CD4-positive, alpha-beta T cell (primary cell): ENCODE measurements at regions of chr9 and their contacts with region 1.

Region 1: GRCh38 chr9:25412646-25413045 is 265.6 kb downstream of the TUSC1 start:
- DNase-seq: no peak
- ATAC-seq: no peak
- H3K4me3 ChIP-seq: no peak overlapping the region
- H3K4me3 Mint-ChIP-seq: no peak overlapping the region
- H3K27ac ChIP-seq: no peak overlapping the region
- H3K27ac Mint-ChIP-seq: no peak overlapping the region
- H3K4me1 ChIP-seq: no peaks in the 10 kb centered on the region
- H3K4me1 Mint-ChIP-seq: no peaks in the 10 kb centered on the region
- H3K27me3 ChIP-seq: no peaks in the 10 kb centered on the region
- H3K27me3 Mint-ChIP-seq: no peaks in the 10 kb centered on the region
- CTCF ChIP-seq: no peak

Region 2: GRCh38 chr9:25381141-25381540 is 31.5 kb before region 1 on chr9:
- CTCF ChIA-PET with region 1: no interaction called
- POLR2A ChIA-PET with region 1: no interaction called
- intact Hi-C with region 1: loop called in 1 of 2 experiments (anchors 2 kb)
- DNase-seq: no peak
- ATAC-seq: no peak
- H3K4me3 ChIP-seq: no peak overlapping the region
- H3K4me3 Mint-ChIP-seq: no peak overlapping the region
- H3K27ac ChIP-seq: no peak overlapping the region
- H3K27ac Mint-ChIP-seq: no peak overlapping the region
- H3K4me1 ChIP-seq: no peaks in the 10 kb centered on the region
- H3K4me1 Mint-ChIP-seq: no peaks in the 10 kb centered on the region
- H3K27me3 ChIP-seq: no peaks in the 10 kb centered on the region
- H3K27me3 Mint-ChIP-seq: no peaks in the 10 kb centered on the region
- CTCF ChIP-seq: no peak

Region 3: GRCh38 chr9:25461416-25461815 is 48.8 kb after region 1 on chr9:
- CTCF ChIA-PET with region 1: no interaction called
- POLR2A ChIA-PET with region 1: no interaction called
- intact Hi-C with region 1: loop called in 1 of 2 experiments (anchors 10 kb)
- DNase-seq: no peak
- ATAC-seq: no peak
- H3K4me3 ChIP-seq: no peak overlapping the region
- H3K4me3 Mint-ChIP-seq: no peak overlapping the region
- H3K27ac ChIP-seq: no peak overlapping the region
- H3K27ac Mint-ChIP-seq: no peak overlapping the region
- H3K4me1 ChIP-seq: no peaks in the 10 kb centered on the region
- H3K4me1 Mint-ChIP-seq: no peaks in the 10 kb centered on the region
- H3K27me3 ChIP-seq: no peaks in the 10 kb centered on the region
- H3K27me3 Mint-ChIP-seq: no peaks in the 10 kb centered on the region
- CTCF ChIP-seq: no peak

Region 4: GRCh38 chr9:25537808-25538207 is 125.2 kb after region 1 on chr9:
- CTCF ChIA-PET with region 1: no interaction called
- POLR2A ChIA-PET with region 1: no interaction called
- intact Hi-C with region 1: no loop called
- DNase-seq: no peak
- ATAC-seq: no peak
- H3K4me3 ChIP-seq: no peak overlapping the region
- H3K4me3 Mint-ChIP-seq: no peak overlapping the region
- H3K27ac ChIP-seq: no peak overlapping the region
- H3K27ac Mint-ChIP-seq: no peak overlapping the region
- H3K4me1 ChIP-seq: no peaks in the 10 kb centered on the region
- H3K4me1 Mint-ChIP-seq: no peaks in the 10 kb centered on the region
- H3K27me3 ChIP-seq: no peaks in the 10 kb centered on the region
- H3K27me3 Mint-ChIP-seq: no peaks in the 10 kb centered on the region
- CTCF ChIP-seq: no peak

Region 5: DNA sequence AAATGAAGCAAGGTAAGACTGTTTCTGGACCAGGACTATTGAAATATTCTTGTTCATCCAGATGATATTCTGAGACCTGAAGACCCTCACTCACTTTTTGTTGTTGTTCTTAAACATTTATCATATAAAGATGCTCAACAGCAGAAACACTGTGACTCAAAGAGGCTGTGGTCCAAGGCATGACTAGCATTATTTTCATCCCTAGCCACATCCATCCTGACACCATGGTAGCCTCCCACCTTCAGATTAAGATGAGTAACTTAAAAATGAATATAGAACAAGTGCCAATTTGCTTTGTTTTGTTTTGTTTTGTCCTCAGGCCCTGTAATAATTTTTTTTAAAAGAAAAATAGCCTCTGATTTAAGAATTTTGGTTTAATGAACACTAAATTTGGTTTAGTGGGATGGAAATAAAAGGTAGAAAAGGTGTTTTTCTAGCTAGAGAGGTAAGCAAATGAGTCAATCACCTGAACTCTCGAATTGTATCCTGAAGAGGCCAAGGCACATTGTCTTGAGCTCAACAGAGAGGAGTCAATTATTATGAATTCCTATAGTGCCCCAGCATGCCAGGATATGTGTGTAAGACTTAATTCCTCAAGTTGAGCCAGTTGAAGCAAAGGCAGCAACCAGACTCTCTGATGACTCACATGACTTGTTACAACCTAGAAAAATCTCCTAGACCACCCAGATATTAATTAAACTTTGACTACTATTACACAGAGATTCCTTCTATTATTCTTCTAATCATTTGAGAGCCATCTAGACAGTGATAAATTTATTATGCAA is 645.7 kb after region 1 on chr9:
- CTCF ChIA-PET with region 1: no interaction called
- POLR2A ChIA-PET with region 1: no interaction called
- intact Hi-C with region 1: no loop called
- DNase-seq: no peak
- ATAC-seq: no peak
- H3K4me3 ChIP-seq: no peak overlapping the region
- H3K4me3 Mint-ChIP-seq: no peak overlapping the region
- H3K27ac ChIP-seq: no peak overlapping the region
- H3K27ac Mint-ChIP-seq: no peak overlapping the region
- H3K4me1 ChIP-seq: no peaks in the 10 kb centered on the region
- H3K4me1 Mint-ChIP-seq: no peaks in the 10 kb centered on the region
- H3K27me3 ChIP-seq: no peaks in the 10 kb centered on the region
- H3K27me3 Mint-ChIP-seq: no peaks in the 10 kb centered on the region
- CTCF ChIP-seq: no peak